ENCODE measurements at regions of chr13 and their contacts with region 1.

Region 1: DNA sequence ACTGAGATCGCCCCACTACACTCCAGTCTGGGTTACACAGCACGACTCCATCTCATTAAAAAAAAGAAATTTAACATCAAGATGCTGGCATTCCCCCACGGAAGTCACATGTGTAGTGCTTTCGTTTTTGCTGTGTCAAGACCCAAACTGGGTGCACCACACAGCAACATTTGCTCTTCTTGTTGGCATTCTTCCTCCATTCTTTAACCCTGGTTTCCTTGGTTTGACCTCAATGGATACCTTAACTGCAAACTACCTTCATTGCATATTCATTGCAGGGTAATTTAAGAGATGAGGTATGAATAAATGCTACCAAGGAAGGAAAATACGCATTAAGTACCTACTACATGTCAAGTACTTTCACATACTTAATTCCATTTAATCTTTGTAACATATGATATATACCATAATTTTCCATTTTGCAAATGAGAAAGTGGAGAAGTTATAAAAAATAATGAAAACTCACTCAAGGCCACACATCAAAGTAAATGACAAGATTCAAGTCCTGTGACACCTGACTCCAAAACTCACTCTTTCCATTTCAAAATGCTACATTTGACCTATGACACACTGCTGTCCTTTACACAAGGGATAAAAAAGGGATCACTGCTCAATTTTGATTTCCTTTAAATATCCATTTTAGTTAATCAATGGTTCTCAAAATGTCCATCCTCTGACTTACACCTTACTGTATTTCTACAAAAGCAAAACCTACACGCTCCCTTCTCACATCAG is 59.2 kb downstream of the STK24 start:
- DNase-seq: no peak
- ATAC-seq: peak; percentile 72
- H3K4me3 Mint-ChIP-seq: peak overlapping the region; percentile 52
- H3K27ac Mint-ChIP-seq: peak overlapping the region; percentile 76
- H3K4me1 Mint-ChIP-seq: peaks cover 97% of the 10 kb centered on the region
- H3K27me3 Mint-ChIP-seq: no peaks in the 10 kb centered on the region
- CTCF ChIP-seq: no peak

Region 2: GRCh38 chr13:98466634-98467236 is 51.0 kb before region 1 on chr13:
- CTCF ChIA-PET with region 1: no interaction called
- POLR2A ChIA-PET with region 1: no interaction called
- intact Hi-C with region 1: no loop called
- DNase-seq: no peak
- ATAC-seq: no peak
- H3K4me3 Mint-ChIP-seq: no peak overlapping the region
- H3K27ac Mint-ChIP-seq: peak overlapping the region; percentile 35
- H3K4me1 Mint-ChIP-seq: no peaks in the 10 kb centered on the region
- H3K27me3 Mint-ChIP-seq: no peaks in the 10 kb centered on the region
- CTCF ChIP-seq: peak; percentile 33

Region 3: DNA sequence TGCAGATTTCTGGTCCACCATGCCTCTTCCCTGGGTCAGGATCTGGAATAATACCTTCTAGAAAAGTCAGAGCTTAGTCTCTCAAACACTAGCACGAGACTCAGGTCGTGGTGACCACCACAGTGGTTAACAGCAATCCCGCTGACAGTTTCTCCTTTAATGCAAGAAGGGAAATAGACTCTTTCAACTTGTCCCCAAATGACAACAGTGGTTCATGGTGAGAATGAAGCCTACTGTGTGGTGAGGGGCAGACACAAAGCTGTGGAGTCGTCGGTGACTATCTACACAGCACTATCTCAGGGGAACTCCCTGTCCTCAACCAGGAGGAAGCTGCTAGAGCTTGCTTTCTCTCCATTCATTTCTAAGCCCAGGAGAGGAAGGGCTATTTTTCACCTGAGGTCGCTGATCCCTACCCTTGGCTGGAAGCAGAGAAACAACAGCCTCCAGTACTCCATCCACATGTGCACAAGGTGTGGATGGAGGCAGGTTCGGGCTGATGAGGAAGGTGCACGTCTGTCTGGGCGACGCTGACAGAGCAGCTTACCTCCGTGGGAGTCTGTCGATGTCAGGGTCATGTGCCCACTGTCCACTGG is 13.3 kb before region 1 on chr13:
- CTCF ChIA-PET with region 1: no interaction called
- POLR2A ChIA-PET with region 1: interaction called, 18 read pairs
- intact Hi-C with region 1: loop called (anchors 2 kb)
- DNase-seq: no peak
- ATAC-seq: peak; percentile 21
- H3K4me3 Mint-ChIP-seq: peak overlapping the region; percentile 42
- H3K27ac Mint-ChIP-seq: peak overlapping the region; percentile 65
- H3K4me1 Mint-ChIP-seq: peaks cover 98% of the 10 kb centered on the region
- H3K27me3 Mint-ChIP-seq: no peaks in the 10 kb centered on the region
- CTCF ChIP-seq: no peak

Region 4: DNA sequence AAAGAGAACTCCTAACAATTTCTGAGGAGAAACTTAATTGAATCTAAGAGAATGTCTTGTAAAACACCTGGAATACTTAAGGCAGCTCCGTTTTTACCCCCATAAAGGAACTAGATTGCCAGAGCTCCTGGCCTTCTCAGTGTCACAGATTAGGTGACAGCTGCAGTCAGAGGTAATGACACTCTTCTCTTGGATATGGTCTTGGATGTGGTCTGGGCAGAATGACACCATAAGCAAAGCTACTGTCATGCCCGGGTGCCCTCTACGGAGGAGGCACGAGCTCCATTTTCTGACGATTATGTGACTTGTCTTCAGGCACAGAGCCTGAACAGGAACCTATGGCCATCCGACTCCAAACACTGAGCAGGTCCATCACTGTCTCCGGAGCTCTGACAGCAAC is 12.5 kb after region 1 on chr13:
- CTCF ChIA-PET with region 1: no interaction called
- POLR2A ChIA-PET with region 1: interaction called, 6 read pairs
- intact Hi-C with region 1: loop called (anchors 1 kb)
- DNase-seq: no peak
- ATAC-seq: no peak
- H3K4me3 Mint-ChIP-seq: no peak overlapping the region
- H3K27ac Mint-ChIP-seq: no peak overlapping the region
- H3K4me1 Mint-ChIP-seq: peaks cover 88% of the 10 kb centered on the region
- H3K27me3 Mint-ChIP-seq: no peaks in the 10 kb centered on the region
- CTCF ChIP-seq: no peak

Region 5: DNA sequence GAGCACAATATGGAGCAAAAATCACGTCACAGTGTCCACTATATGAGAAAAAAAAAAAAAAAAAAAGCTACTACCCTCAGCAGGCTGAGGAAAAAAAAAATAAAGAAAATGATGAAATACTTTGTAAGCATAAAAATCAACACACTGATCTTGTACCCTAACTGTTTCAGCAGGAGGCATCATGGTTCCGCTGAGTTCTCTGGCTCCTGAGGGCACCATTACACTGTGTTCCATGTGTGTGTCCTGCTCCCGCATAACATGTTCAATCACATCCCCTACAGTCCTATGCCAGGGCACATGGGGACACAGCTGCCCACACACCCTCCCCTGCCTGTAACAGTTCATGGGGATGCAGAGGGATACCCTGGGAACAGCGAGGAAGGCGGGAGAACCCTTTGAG is 426.6 kb after region 1 on chr13:
- CTCF ChIA-PET with region 1: no interaction called
- POLR2A ChIA-PET with region 1: no interaction called
- intact Hi-C with region 1: no loop called
- DNase-seq: no peak
- ATAC-seq: no peak
- H3K4me3 Mint-ChIP-seq: no peak overlapping the region
- H3K27ac Mint-ChIP-seq: no peak overlapping the region
- H3K4me1 Mint-ChIP-seq: no peaks in the 10 kb centered on the region
- H3K27me3 Mint-ChIP-seq: no peaks in the 10 kb centered on the region
- CTCF ChIP-seq: no peak